Psoas muscle (tissue), 8 donors: ENCODE measurements at regions of chr1 and their contacts with region 1.

Region 1: DNA sequence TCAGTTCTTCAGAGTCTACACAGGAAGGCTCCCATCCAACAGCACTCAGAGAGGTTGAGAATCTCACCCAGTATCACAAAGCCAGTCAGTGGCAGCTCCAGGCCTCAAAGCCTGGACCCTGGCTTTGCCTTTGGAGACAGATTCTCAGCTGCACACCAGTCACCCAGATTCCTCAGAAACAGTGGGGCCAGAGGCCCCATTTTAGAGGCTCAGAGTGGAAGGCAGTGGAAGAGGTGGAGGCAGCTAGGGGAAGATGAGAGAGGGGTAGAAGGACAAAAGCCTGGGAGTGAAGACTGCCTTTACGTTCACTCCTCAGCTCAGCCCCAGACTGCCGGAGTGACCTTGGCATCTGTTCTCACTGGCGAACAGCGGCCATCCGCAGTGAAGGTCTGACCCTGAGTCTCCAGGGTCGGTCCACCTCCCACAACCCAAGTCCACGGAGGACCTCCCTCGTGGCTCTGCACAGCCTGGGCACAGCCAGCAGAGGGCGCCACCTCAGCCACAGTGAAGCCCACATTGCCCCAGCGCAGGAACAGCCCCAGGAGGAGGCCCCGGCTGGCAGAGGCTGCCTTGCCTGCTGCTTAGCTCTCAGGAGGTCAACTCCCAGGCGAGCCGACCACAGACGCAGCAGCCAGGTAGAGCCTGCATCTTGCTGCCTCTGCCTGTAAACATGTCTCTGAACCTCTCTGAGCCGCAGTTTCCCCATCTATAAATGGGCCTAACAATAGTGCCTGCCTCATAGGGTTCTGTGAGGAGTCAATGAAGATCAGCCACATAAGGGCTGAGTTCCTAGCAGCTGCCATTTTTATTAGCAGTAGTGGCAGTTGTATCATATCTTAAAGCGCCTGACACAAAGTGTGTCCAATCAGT is 5.9 kb upstream of the FNDC5 start:
- DNase-seq: peak; percentile 64 to 80
- ATAC-seq: peak; percentile 78 to 84 (median 78)
- H3K4me3 ChIP-seq: no peak overlapping the region
- H3K27ac ChIP-seq: no peak overlapping the region
- H3K4me1 ChIP-seq: peaks cover 4% of the 10 kb centered on the region
- H3K27me3 ChIP-seq: no peaks in the 10 kb centered on the region
- CTCF ChIP-seq: peak; percentile 84

Region 2: GRCh38 chr1:32636914-32637645 is 239.5 kb before region 1 on chr1:
- intact Hi-C with region 1: no loop called
- DNase-seq: no peak
- ATAC-seq: no peak
- H3K4me3 ChIP-seq: no peak overlapping the region
- H3K27ac ChIP-seq: no peak overlapping the region
- H3K4me1 ChIP-seq: no peaks in the 10 kb centered on the region
- H3K27me3 ChIP-seq: no peaks in the 10 kb centered on the region
- CTCF ChIP-seq: no peak

Region 3: DNA sequence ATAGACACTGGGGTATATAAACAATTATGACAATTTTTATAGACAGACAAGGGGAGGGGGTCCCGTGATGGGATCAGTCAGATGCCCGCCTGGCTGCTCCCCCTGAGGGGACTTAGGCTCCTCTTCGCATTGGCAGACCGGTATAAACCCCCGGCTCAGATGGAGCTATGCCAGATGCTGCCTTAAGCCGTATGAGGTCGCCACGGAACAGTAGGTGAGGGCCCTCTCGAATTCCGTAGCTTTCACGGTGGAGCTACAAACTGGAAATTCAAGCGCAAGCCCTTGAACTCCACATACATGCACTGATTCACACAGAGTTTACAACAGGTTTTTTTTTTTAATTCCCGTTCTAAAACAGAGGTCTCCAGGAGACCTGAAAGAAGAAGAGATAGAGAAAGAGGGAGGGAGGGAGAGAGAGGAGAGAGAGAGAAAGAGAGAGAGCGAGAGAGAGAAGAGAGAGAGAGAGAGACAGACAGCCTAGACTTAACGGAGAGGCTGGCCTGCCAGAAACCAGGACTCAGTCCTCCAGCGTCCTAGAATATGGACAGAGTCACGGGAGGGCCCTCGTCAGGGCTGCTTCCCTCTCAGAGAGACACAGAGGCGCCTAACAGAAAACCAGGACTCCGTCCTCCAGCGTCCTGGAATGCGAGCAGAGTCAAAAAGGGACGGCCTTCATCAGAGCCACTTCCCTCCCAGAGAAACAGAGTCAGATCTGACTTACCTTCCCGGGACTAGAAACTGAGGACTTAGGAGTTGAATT is 49.0 kb after region 1 on chr1:
- intact Hi-C with region 1: no loop called
- DNase-seq: no peak
- ATAC-seq: no peak
- H3K4me3 ChIP-seq: no peak overlapping the region
- H3K27ac ChIP-seq: no peak overlapping the region
- H3K4me1 ChIP-seq: peaks cover 6% of the 10 kb centered on the region
- H3K27me3 ChIP-seq: peaks cover 0 to 19% (median 12%) of the 10 kb centered on the region in 3 donors
- CTCF ChIP-seq: no peak

Region 4: DNA sequence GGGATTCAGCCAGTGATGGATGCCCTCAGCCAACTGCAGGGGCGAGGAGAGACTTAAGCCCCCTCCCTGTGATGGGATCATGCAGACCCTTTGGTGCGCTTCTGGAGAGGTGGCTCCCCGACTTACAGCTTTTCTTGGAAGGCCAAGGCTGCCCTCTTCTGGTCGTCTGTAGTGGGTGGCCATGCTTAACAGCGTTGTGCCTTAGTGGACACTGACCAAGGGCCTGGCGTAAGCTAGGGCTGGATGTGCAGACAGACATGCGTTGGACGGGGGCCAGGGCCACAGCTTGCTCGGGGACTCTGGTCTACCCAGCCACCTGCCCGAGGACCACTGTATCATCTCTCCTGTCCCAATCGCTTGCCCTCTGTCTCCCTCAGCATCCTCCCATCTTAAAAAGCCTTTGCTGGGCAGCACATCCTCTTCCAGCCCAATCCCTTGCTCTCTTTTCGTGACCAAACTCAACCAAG is 209.8 kb after region 1 on chr1:
- intact Hi-C with region 1: loop called in 1 of 2 experiments (anchors 5 kb)
- DNase-seq: peak; percentile 78 to 86
- ATAC-seq: peak; percentile 64 to 76 (median 70)
- H3K4me3 ChIP-seq: no peak overlapping the region
- H3K27ac ChIP-seq: no peak overlapping the region
- H3K4me1 ChIP-seq: peaks cover 16% of the 10 kb centered on the region
- H3K27me3 ChIP-seq: no peaks in the 10 kb centered on the region
- CTCF ChIP-seq: peak; percentile 71

Region 5: DNA sequence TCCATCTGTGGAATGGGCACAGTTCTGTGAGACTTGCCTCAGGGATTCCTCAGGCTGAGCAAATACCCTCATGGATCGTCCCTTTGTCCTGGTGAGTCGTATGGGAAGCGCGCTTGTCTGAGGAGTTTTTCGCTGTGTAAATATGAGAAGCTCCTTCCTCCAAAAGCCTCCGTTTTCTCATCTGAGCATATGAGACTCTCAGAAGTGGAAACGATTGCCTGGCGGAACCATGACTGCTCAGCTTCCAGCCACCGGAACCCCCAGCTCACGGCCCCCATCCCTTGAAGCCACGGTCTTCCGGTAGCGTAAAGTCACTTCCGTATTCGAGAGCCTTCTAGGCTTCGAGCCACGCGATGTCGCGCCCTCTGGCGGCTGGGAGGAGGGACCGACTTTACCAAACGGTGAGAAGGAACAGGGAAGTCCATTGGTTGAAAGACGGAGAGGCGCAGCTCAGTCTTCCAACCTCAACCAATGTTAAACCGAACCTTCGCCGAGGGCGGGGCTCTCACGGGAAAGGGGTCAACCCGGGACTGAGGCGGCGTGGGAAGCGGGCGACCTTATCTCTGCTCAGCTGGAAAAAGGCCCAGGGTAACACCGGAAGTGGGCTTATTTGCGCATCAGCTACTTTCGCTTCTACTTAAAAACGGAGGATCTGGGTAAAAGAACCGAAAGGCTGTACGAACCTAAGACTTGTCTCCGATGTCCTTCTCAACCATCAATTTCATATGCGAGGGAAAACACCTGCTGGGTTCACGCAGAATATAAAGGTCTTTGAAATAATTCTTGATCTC is 250.6 kb after region 1 on chr1:
- intact Hi-C with region 1: no loop called
- DNase-seq: peak; percentile 99
- ATAC-seq: peak; percentile 92 to 98 (median 94)
- H3K4me3 ChIP-seq: peak overlapping the region; percentile 88
- H3K27ac ChIP-seq: peak overlapping the region; percentile 91
- H3K4me1 ChIP-seq: peaks cover 36% of the 10 kb centered on the region
- H3K27me3 ChIP-seq: peaks cover 0 to 3% (median 0%) of the 10 kb centered on the region in 3 donors
- CTCF ChIP-seq: peak; percentile 89